Upper lobe of right lung (tissue), 1 donor: ENCODE measurements at regions of chr11 and their contacts with region 1.

Region 1: DNA sequence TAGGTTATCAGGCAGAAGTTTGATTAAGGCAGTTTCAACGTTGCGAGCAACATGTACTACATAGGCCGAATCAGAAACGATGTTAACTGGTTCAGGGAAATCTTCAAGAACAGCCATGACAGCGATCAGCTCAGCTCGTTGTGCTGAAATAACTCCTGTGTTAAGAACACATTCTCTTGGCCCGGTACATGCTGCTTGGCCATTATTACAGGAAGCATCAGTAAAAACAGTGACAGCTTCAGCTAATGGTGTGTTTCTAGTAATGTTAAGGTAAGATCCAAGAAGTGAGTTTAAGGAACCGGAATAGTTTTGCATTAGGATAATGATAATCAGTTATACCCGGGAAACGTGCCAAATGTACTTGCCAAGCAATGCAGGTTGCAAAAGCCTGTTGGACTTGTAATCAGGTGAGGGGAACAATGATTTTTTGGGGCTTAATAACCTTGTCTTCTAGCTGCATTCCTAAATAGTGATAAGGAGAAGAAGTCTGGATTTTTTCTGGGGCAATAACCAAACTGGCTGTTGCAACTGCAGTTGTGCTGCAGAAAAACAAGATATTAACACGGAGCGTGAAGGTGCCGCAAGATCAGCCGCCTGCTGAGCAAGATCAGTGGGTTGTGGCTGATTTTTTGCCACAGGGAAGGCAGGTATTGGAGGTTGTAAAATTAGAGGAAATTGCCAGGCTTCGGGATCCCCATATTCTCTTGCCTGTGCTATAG is 14.3 kb downstream of the OR52K1 start:
- DNase-seq: no peak
- ATAC-seq: no peak
- H3K4me3 ChIP-seq: no peak overlapping the region
- H3K27ac ChIP-seq: no peak overlapping the region
- H3K4me1 ChIP-seq: no peaks in the 10 kb centered on the region
- H3K27me3 ChIP-seq: peaks cover 4% of the 10 kb centered on the region
- CTCF ChIP-seq: no peak

Region 2: DNA sequence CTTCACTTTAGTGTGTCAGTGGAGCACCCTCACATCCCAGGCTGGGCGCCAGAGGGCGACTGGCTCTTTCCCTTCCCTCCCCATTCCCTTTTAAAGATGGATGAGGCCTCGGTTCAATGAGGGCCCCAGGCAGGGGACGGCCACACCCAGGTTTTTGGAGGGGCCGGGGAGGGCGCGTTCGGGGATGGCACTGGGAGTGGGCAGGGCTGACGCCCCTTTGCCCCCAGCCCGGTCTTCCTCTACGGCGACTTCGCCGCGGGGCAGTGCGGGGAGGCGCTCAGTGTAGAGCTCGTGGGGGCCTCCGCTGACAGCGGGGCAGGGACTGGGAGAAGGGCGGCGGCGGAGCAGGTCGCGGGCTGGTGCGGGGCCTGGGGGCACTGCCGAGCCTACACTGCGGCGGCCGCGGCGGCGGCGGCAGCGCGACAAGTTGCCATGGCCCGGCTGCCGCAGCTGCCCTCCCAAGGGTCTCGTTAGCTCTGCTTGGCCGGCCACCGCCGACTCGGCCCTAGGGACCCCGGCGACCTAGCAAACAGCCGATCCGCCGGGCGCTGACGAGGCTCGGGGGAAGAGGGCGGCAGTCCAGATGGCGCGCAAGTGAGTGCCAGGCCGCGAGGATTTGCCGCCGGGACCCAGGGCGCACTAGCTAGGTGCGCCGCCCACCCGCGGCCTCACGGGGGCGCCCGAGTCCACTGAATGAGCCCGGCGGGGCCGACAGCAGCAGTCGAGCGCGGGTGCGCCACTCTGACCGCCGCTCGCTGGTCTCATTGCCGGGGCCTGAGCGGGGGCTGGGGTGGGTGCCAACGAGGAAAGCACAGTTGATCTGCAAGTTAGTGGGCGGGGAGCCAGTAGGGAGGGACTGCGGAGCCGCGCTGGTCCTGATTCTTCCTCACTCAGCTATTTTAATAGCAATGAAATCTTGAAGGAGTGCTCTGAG is 309.4 kb before region 1 on chr11:
- intact Hi-C with region 1: loop called (anchors 10 kb)
- DNase-seq: peak; percentile 94
- ATAC-seq: peak; percentile 97
- H3K4me3 ChIP-seq: peak overlapping the region; percentile 59
- H3K27ac ChIP-seq: no peak overlapping the region
- H3K4me1 ChIP-seq: peaks cover 6% of the 10 kb centered on the region
- H3K27me3 ChIP-seq: no peaks in the 10 kb centered on the region
- CTCF ChIP-seq: peak; percentile 96

Region 3: DNA sequence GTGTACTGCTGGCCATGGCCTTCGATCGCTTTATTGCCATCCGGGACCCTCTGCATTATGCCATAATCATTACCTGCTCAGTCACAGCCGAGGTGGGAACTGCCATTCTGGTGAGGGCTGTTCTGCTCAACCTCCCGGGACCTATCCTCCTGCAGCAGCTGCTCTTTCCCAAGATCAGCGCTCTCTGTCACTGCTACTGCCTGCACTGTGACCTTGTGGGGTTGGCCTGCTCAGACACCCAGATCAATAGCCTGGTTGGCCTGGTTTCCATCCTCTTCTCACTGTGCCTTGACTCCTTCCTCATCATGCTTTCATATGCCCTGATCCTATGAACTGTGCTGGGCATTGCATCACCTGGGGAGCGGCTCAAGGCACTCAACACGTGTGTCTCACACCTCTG is 78.3 kb before region 1 on chr11:
- intact Hi-C with region 1: no loop called
- DNase-seq: no peak
- ATAC-seq: no peak
- H3K4me3 ChIP-seq: no peak overlapping the region
- H3K27ac ChIP-seq: no peak overlapping the region
- H3K4me1 ChIP-seq: no peaks in the 10 kb centered on the region
- H3K27me3 ChIP-seq: no peaks in the 10 kb centered on the region
- CTCF ChIP-seq: no peak